Activated CD4-positive, alpha-beta T cell treated with anti-CD3 and anti-CD28 coated beads, Interleukin-2, amount 10 ng/mL, durations not matched to agents 7 days and 5 days (primary cell): ENCODE measurements at regions of chr9 and their contacts with region 1.

Region 1: DNA sequence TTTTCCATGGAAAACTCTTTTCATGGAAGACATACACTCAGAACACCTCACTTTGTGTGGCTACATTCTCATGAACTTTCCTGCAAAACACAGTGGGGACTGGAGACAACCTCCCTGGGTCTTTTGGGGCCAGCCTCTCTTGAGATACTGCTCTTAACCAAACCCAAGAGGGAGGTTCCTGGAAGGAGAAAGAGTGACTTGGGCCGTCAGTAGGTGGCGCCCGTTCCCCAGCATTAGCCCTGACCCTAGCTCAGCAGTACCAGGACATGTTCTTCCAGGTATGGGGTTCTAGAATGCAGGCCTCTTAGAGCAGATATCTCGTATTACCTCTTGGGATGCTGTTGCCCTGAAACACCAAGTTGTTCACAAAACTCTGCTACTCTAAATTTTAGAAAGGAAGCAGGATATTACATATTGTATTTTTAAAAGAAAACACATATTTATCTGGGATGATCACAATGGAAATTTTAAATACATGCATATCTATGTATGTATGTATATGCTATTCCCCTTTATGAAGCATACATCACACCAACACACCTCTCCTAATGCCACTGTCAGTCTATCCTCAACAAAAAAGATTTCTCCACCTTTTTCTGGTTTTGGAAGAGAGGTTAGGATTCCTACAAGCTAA is 15.8 kb upstream of the GLIS3 start:
- DNase-seq: peak; percentile 72
- H3K4me3 Mint-ChIP-seq: no peak overlapping the region
- H3K27ac Mint-ChIP-seq: no peak overlapping the region
- H3K4me1 Mint-ChIP-seq: no peaks in the 10 kb centered on the region
- H3K27me3 Mint-ChIP-seq: peaks cover 4% of the 10 kb centered on the region

Region 2: DNA sequence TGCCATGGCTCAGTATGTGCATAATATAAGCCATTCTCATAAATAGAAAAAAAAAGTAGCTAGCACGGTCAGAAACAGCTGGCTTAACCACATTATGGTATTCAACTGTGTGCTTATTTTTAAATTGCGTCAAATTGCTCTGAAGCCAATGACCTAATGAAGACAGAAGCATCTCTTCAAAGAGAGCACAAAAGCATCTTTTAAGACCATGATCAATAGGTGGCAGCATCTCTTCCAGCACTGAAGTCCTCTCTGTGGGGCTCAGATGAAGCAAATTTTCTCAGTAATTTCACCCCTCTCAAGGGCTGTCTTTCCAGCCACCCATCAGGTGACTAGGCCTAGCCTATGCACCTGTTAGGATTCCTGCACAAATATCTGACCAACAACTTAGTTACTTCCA is 267.3 kb before region 1 on chr9:
- CTCF ChIA-PET with region 1: no interaction called
- POLR2A ChIA-PET with region 1: no interaction called
- DNase-seq: no peak
- H3K4me3 Mint-ChIP-seq: no peak overlapping the region
- H3K27ac Mint-ChIP-seq: no peak overlapping the region
- H3K4me1 Mint-ChIP-seq: no peaks in the 10 kb centered on the region
- H3K27me3 Mint-ChIP-seq: no peaks in the 10 kb centered on the region

Region 3: DNA sequence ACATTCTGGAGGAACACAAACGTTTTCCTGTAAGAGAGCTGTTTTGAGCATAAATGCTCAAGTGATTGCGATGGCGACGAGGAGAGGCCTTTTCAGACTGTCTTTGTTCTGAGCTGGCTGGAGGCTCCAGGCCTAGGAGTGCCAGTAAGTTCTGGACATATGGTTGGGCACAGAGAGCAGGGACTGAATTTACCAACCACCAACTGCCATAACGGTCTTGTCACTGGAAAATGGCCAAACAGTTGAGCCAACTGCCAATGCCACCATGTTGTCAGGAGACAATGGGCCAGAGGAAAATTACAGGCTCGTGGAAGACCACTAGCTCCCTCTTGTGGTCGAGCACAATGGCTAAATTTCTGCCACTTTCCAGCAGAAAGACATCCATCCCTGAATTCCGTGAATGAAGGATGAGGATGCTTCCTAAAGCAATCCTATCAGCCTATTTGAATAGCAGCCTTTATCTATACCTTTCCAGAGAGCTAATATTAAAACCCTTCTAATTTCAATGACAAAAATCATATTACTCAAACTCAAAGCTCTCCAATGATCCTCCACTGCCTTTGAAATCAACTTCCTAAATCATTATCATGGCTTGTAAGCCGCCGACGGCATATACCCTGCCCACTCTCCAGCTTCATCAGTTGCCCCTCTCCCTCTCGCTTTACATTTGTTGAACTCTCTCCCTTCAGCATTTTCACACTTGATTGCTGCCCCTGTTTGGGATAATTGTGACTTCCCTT is 51.1 kb after region 1 on chr9:
- CTCF ChIA-PET with region 1: interaction called, 10 read pairs
- POLR2A ChIA-PET with region 1: no interaction called
- DNase-seq: peak; percentile 29
- H3K4me3 Mint-ChIP-seq: no peak overlapping the region
- H3K27ac Mint-ChIP-seq: no peak overlapping the region
- H3K4me1 Mint-ChIP-seq: no peaks in the 10 kb centered on the region
- H3K27me3 Mint-ChIP-seq: peaks cover 4% of the 10 kb centered on the region